ENCODE measurements at regions of chr14 and their contacts with region 1.

Region 1: GRCh38 chr14:69606258-69607184 is 4.9 kb upstream of the SUSD6 start:
- DNase-seq: no peak
- CTCF ChIP-seq: no peak

Region 2: DNA sequence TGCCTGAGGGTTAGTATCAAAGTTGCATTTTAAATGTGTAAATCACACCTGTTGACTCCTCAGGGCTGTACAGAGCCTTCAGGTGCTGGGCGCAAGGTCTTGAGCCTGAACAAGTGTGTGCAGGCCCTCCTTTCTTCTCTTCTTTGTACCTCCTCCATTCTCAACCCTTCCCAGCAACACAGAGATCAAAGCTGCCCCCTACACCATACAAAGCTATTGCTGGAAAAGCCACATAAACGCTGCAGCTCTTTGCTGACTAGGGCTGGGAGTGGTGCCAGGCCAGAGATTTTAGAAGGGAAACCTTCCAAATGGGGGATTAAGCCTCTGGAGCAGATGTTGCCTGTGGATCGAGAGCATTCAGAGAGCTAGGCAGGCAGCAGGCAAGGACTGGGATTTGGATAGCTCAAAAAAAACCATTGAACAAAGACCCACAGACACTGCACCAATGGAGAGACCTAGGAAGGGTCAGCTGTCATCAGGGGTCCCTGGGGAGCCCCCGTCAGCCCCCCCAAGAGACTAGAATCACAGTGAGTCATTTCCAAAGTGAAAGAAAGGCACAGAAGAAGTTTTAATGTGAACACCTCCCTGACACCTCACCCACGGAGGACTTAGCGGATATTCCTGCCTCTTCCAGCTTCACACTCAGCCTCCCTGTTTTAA is 13.4 kb before region 1 on chr14:
- CTCF ChIA-PET with region 1: interaction called, 23 read pairs
- POLR2A ChIA-PET with region 1: no interaction called
- DNase-seq: no peak
- CTCF ChIP-seq: no peak

Measured in GM10248 (cell line).